Right ventricle myocardium inferior (tissue), 1 donor: ENCODE measurements at regions of chr6 and their contacts with region 1.

Region 1: DNA sequence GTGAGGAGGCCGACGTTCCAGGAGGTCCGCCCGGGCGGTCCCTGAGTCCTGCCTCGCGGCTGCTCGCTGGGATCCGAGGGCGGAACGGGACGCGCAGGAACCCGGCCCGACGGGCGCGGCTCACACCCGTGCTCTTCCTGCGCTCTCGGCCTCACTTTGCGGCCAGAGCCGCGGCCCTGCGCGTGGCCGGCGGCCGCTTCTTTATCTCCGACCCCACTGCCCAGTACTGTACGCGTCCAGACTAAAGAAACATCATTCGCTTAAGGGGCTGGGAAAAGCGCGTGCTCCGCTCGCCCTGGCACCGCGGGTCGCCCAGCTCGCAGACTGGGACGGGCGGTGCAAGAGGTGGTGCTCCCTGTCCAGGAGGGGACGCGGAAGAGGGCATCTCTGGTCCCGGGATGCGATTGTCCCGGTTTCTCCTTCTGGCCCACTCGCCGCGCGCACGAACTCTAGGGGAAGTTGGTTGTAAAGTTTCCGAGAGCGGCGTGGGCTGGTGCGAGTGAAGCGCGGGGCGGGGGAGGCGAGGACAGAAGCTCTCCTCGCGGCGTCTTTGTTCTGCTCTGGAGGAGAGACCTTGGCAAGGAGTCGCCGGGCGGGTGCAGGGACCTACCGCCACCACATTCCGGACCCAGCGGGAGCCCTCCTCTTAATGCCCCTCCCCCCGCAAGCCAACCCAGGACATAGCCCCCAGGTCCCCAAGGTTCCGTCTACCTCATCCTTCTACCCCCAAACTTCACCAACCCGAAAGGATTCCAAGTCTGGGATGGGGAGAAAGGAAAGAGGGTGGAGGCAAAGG is 71.0 kb downstream of the SOX4 start:
- DNase-seq: no peak
- ATAC-seq: peak; percentile 29

Region 2: GRCh38 chr6:21342501-21342900 is 322.0 kb before region 1 on chr6:
- intact Hi-C with region 1: no loop called
- DNase-seq: no peak
- ATAC-seq: peak; percentile 90

Region 3: DNA sequence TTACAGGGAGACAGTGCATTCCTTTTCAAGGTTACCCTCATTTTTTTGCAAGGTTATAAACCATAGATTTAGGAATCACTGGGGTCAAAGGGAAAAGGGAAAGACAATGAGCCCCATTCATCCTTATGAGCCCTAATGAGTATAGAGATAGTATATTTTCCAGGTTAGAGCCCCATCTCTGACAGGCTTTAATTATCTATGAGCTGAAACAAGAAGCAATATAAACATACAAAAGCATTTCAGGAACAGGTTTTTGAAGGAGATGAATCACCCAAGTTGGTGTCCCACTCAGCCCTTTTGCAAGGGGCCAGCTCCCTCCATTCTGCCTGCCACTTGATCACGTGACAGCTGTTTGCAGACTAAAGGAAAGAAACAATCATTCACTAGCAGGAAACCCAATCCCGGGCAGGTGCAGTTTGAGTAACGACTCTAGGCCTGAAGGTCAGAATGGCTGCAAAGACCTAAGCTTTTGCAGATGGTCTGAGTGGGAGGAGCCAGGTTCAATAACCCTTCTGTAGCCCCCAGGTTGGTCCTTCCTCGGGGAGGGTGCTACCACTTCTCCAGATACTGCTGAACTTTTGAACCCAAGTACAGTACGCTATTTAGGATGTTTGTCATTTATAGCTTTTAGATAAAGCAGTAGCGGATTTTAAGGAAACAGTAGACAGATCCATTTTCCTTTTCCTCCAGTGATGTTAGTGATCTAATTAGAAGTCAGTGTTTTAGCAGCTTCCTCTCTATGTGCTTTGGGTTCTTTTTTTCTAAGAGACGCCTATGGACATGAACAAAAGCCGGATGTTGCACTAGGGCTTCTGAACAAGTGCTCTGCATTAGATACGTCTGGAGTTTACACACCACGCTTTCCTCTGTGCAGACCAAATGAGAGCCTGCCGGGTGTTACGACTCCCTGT is 182.3 kb after region 1 on chr6:
- intact Hi-C with region 1: loop called (anchors 10 kb)
- DNase-seq: no peak
- ATAC-seq: peak; percentile 9